ENCODE measurements at regions of chr1 and their contacts with region 1.

Region 1: DNA sequence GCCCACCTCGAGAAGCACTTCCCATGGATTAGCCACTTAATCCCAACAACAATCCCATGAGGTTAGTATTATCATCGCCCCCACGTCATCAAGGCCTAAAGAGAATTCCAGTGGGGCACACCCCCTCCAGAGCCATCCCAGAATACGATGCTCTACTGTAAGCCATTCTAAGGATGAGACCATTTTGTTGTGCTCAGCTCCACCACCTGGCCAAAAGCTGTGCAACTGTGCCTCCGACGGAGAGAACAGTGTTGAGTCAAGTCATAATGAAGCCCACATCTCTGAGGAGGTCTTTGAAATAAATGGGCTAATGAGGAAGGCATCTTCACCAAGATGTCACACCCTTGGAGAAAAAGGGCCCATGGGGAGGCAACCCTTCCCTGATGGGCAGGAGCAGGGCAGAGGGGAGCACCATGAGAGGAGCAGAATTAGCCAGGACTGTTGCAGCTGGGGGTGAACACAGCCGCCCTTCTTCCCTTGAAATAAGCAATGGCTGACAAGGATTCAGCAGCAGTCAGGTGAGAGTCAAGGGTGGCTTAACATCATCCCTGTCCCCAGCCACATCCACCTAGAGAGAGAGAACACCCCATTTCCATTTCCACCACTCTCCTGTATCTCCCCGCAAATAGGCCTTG is 14.6 kb downstream of the SYF2 start:
- DNase-seq: no peak
- H3K4me3 ChIP-seq: no peak overlapping the region
- H3K27ac ChIP-seq: no peak overlapping the region
- H3K4me1 ChIP-seq: no peaks in the 10 kb centered on the region
- H3K27me3 ChIP-seq: no peaks in the 10 kb centered on the region
- CTCF ChIP-seq: no peak
- POLR2A ChIP-seq: no peak

Region 2: DNA sequence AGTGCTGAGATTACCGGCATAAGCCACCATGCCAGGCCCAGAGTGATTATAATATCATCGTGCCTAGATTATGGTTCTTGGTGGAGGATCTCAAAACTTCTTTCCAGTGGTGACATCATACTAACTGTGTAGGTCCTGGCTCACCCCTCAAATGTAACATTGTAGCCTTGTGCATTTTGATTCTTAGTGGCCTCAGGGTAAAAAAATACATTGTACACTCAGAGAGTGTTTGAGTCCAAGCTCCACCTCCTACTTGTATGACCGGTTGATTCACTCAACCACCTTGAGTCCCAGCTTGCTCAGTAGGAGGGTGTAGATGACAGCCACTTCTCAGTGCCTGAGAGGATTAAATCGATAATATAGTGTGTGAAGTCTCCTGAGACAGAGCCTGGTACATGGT is 623.6 kb before region 1 on chr1:
- intact Hi-C with region 1: no loop called
- DNase-seq: no peak
- H3K4me3 ChIP-seq: no peak overlapping the region
- H3K27ac ChIP-seq: no peak overlapping the region
- H3K4me1 ChIP-seq: no peaks in the 10 kb centered on the region
- H3K27me3 ChIP-seq: no peaks in the 10 kb centered on the region
- CTCF ChIP-seq: no peak
- POLR2A ChIP-seq: no peak

Region 3: GRCh38 chr1:24688621-24689195 is 529.0 kb before region 1 on chr1:
- intact Hi-C with region 1: loop called (anchors 5 kb)
- DNase-seq: peak; percentile 10 to 48
- H3K4me3 ChIP-seq: no peak overlapping the region
- H3K27ac ChIP-seq: no peak overlapping the region
- H3K4me1 ChIP-seq: no peaks in the 10 kb centered on the region
- H3K27me3 ChIP-seq: no peaks in the 10 kb centered on the region
- CTCF ChIP-seq: peak; percentile 65 to 90 (median 83)
- POLR2A ChIP-seq: no peak

Region 4: DNA sequence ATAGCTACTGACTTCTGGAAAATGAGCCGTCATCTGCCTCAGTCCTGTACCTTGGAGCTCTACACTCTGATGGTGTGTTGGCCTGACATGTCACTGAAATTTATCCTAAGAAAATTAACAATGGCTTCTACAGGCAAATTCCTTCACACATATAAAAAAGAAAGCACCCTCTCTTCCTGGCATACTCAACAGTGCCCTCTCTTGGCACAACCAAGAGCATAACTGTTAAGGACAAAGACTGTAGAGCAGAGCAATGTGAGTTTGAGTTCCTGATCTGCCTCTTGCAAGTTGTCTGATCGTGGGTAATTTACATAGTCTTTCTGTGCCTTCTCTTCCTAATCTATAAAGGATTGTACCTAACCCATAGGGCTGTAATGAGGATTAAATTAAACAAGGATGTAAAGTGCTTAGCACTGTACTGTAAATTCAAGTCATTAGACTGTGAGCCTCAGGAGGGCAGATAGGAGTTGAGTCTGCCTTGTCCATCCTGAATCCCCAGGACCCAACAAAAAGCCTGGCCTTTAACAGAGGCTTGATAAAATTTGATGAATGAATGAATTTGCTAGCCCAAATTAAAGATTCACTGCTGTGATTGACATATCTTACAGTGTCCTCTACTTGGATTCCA is 68.9 kb before region 1 on chr1:
- intact Hi-C with region 1: no loop called
- DNase-seq: no peak
- H3K4me3 ChIP-seq: no peak overlapping the region
- H3K27ac ChIP-seq: no peak overlapping the region
- H3K4me1 ChIP-seq: no peaks in the 10 kb centered on the region
- H3K27me3 ChIP-seq: no peaks in the 10 kb centered on the region
- CTCF ChIP-seq: no peak
- POLR2A ChIP-seq: no peak